ENCODE measurements at regions of chr1 and their contacts with region 1.

Region 1: GRCh38 chr1:155084722-155085503 is 6.3 kb downstream of the EFNA3 start:
- DNase-seq: peak; percentile 83 to 89
- ATAC-seq: peak; percentile 87 to 89
- H3K4me3 ChIP-seq: peak overlapping the region; percentile 57 to 85 (median 72)
- H3K27ac ChIP-seq: peak overlapping the region; percentile 87 to 95 (median 89)
- H3K4me1 ChIP-seq: peaks cover 32 to 43% of the 10 kb centered on the region in 2 donors
- H3K27me3 ChIP-seq: peaks cover 40 to 45% (median 44%) of the 10 kb centered on the region in 3 donors
- CTCF ChIP-seq: peak; percentile 90 to 97 (median 95)
- POLR2A ChIP-seq: peak; percentile 50 to 87

Region 2: DNA sequence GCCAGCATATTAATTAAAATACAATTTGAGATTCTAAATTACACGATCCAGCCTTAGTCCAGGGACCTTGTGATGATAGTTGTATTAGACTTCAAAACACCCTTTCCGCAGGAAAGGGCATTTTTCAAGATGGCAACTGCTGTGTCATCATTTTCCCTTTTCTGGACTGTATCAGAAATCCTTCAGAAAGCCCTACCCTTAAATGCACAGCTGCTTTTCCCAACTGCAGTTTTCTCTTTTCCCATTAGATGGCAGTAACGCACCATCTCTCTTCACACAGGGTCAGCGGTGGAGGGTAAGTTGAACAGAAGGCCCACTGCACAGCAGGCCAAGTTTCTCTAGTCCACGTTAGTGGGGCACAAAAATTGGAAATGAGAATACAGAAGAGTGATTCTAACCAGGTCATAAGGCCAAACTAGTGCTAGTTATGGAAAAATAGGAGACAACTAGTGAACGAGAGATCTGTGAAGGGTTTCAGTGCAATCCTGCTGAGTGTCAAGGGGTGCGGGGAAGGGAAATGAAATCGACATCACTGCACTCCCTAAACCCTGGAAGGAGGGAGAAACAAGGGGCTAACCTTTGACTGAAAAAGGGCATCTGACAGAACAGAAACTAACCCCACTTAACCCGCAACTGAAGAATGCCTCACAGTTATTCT is 605.0 kb before region 1 on chr1:
- in situ Hi-C with region 1: no loop called
- intact Hi-C with region 1: loop called (anchors 5 kb)
- DNase-seq: peak in 1 of 2 donors; percentile 52
- ATAC-seq: peak; percentile 87 to 95
- H3K4me3 ChIP-seq: no peak overlapping the region
- H3K27ac ChIP-seq: no peak overlapping the region
- H3K4me1 ChIP-seq: peaks cover 0 to 11% of the 10 kb centered on the region in 2 donors
- H3K27me3 ChIP-seq: no peaks in the 10 kb centered on the region
- CTCF ChIP-seq: peak; percentile 79 to 94 (median 88)
- POLR2A ChIP-seq: no peak

Region 3: GRCh38 chr1:154906621-154907081 is 178.3 kb before region 1 on chr1:
- in situ Hi-C with region 1: no loop called
- intact Hi-C with region 1: loop called (anchors 5 kb)
- DNase-seq: no peak
- ATAC-seq: peak; percentile 56 to 66
- H3K4me3 ChIP-seq: no peak overlapping the region
- H3K27ac ChIP-seq: no peak overlapping the region
- H3K4me1 ChIP-seq: no peaks in the 10 kb centered on the region
- H3K27me3 ChIP-seq: no peaks in the 10 kb centered on the region
- CTCF ChIP-seq: peak in 3 of 5 experiments; percentile 54 to 56 (median 56)
- POLR2A ChIP-seq: no peak

Region 4: GRCh38 chr1:154974063-154974807 is 110.7 kb before region 1 on chr1 and contains the start of gene CKS1B:
- in situ Hi-C with region 1: no loop called
- intact Hi-C with region 1: loop called (anchors 5 kb)
- DNase-seq: peak; percentile 97 to 99
- ATAC-seq: peak; percentile 83
- H3K4me3 ChIP-seq: peak within 1 kb of the TSS; percentile 67 to 75 (median 74)
- H3K27ac ChIP-seq: peak within 1 kb of the TSS; percentile 93 to 96 (median 95)
- H3K4me1 ChIP-seq: peaks cover 49 to 54% of the 10 kb centered on the region in 2 donors
- H3K27me3 ChIP-seq: no peaks in the 10 kb centered on the region
- CTCF ChIP-seq: no peak
- POLR2A ChIP-seq: peak; percentile 72 to 73
- total RNA-seq, gene CKS1B: 3.6 to 15.7 (median 7.9) TPM

Region 5: GRCh38 chr1:155017041-155017945 is 67.6 kb before region 1 on chr1:
- in situ Hi-C with region 1: no loop called
- intact Hi-C with region 1: loop called (anchors 2 kb)
- DNase-seq: peak; percentile 70 to 90
- ATAC-seq: peak; percentile 84 to 88
- H3K4me3 ChIP-seq: peak overlapping the region; percentile 48 to 52 (median 50)
- H3K27ac ChIP-seq: peak overlapping the region; percentile 80 to 95 (median 86)
- H3K4me1 ChIP-seq: peaks cover 21 to 26% of the 10 kb centered on the region in 2 donors
- H3K27me3 ChIP-seq: no peaks in the 10 kb centered on the region
- CTCF ChIP-seq: peak; percentile 96 to 100 (median 97)
- POLR2A ChIP-seq: peak; percentile 37 to 47

Region 6: GRCh38 chr1:155044812-155045690 is 39.9 kb before region 1 on chr1:
- in situ Hi-C with region 1: no loop called
- intact Hi-C with region 1: loop called (anchors 1 kb)
- DNase-seq: peak; percentile 82 to 89
- ATAC-seq: peak; percentile 95 to 98
- H3K4me3 ChIP-seq: no peak overlapping the region
- H3K27ac ChIP-seq: peak overlapping the region; percentile 42 to 74 (median 64)
- H3K4me1 ChIP-seq: peaks cover 15 to 20% of the 10 kb centered on the region in 2 donors
- H3K27me3 ChIP-seq: no peaks in the 10 kb centered on the region
- CTCF ChIP-seq: peak; percentile 77 to 85 (median 82)
- POLR2A ChIP-seq: no peak

Region 7: GRCh38 chr1:155063550-155064110 is 21.3 kb before region 1 on chr1 and contains the start of gene EFNA4:
- in situ Hi-C with region 1: no loop called
- intact Hi-C with region 1: loop called (anchors 1 kb)
- DNase-seq: peak; percentile 69 to 72
- ATAC-seq: peak; percentile 91 to 93
- H3K4me3 ChIP-seq: peak within 1 kb of the TSS; percentile 60 to 91 (median 78)
- H3K27ac ChIP-seq: peak within 1 kb of the TSS; percentile 69 to 80 (median 75)
- H3K4me1 ChIP-seq: peaks cover 9 to 18% of the 10 kb centered on the region in 2 donors
- H3K27me3 ChIP-seq: no peaks in the 10 kb centered on the region
- CTCF ChIP-seq: no peak
- POLR2A ChIP-seq: peak in 1 of 2 donors; percentile 28
- total RNA-seq, gene EFNA4: 0.41 to 0.87 (median 0.80) TPM

Region 8: DNA sequence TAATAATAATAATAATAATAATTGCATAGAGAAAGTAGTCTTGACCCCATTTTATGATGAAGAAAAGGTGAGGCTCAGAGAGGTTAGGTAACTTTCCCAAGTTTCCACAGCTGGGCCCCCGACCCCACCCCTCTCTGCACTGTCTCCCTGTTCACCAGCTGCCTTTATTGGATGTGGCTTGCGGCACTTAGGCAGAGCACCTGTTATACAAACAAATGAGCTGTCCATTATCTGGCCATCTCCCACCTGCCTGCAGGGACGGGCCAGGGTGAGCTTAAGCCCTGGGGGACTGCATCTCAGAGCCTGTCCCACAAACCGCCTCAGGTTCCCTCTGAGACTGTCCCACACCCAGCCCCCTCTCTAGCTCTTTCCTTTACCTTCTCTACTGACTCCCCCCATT is 32.7 kb after region 1 on chr1:
- in situ Hi-C with region 1: no loop called
- intact Hi-C with region 1: no loop called
- DNase-seq: no peak
- ATAC-seq: no peak
- H3K4me3 ChIP-seq: no peak overlapping the region
- H3K27ac ChIP-seq: no peak overlapping the region
- H3K4me1 ChIP-seq: no peaks in the 10 kb centered on the region
- H3K27me3 ChIP-seq: peaks cover 0 to 3% (median 0%) of the 10 kb centered on the region in 3 donors
- CTCF ChIP-seq: no peak
- POLR2A ChIP-seq: no peak